Activated T-helper 1 cell treated with anti-CD3 and anti-CD28 coated beads, Interleukin-12 subunit alpha, Interleukin-12 subunit beta, Interleukin-2, Interleukin-4 antibody, amounts not matched to agents 30 ng/mL and 10 ng/mL and 1 ng/mL, durations not matched to agents 14 hours and 24 hours and 36 hours (primary cell): ENCODE measurements at regions of chr12 and their contacts with region 1.

Region 1: GRCh38 chr12:56468216-56469006 is at the start of gene SPRYD4:
- DNase-seq: peak; percentile 94
- H3K4me3 Mint-ChIP-seq: peak within 1 kb of the TSS; percentile 99
- H3K27ac Mint-ChIP-seq: peak within 1 kb of the TSS; percentile 98
- H3K4me1 Mint-ChIP-seq: peaks cover 19% of the 10 kb centered on the region
- H3K27me3 Mint-ChIP-seq: no peaks in the 10 kb centered on the region
- total RNA-seq, gene SPRYD4: 5.0 and 5.5 TPM in 2 replicates

Region 2: DNA sequence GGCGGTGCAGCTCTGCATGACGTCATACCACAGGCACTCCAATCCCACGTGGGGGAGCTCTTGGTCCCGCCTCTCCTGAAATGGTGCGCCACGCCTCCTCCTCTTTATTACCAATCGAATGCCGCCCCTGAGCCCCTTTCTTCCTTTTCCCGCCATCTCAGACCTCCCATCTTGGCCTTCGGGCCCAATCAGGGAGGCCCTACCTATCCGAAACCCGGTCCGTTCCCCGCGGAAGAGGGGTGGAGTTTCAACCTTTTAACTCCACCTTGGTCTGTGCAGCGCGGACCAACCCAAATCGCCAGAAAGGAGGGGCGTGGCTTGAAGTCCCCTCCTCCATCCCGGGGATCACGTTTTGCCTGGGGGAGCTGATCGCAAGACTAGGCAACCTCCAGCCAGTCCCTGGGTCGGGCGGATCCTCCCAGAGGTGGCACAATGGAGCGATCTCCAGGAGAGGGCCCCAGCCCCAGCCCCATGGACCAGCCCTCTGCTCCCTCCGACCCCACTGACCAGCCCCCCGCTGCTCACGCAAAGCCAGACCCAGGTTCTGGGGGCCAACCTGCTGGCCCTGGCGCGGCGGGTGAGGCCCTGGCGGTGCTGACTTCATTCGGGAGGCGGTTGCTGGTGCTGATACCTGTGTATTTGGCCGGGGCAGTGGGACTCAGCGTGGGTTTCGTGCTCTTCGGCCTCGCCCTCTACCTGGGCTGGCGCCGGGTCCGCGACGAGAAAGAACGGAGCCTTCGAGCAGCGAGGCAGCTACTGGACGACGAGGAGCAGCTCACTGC is 340.3 kb before region 1 on chr12 and contains the start of gene ESYT1:
- intact Hi-C with region 1: loop called (anchors 2 kb)
- DNase-seq: peak; percentile 98
- H3K4me3 Mint-ChIP-seq: peak within 1 kb of the TSS; percentile 97
- H3K27ac Mint-ChIP-seq: peak within 1 kb of the TSS; percentile 94
- H3K4me1 Mint-ChIP-seq: peaks cover 62% of the 10 kb centered on the region
- H3K27me3 Mint-ChIP-seq: no peaks in the 10 kb centered on the region
- total RNA-seq, gene ESYT1: 159 and 161 TPM in 2 replicates

Region 3: GRCh38 chr12:56258057-56258819 is 210.2 kb before region 1 on chr12 and contains the start of gene ANKRD52:
- intact Hi-C with region 1: loop called (anchors 2 kb)
- DNase-seq: peak; percentile 82
- H3K4me3 Mint-ChIP-seq: peak within 1 kb of the TSS; percentile 90
- H3K27ac Mint-ChIP-seq: peak within 1 kb of the TSS; percentile 83
- H3K4me1 Mint-ChIP-seq: peaks cover 22% of the 10 kb centered on the region
- H3K27me3 Mint-ChIP-seq: no peaks in the 10 kb centered on the region
- total RNA-seq, gene ANKRD52: 71.0 and 83.9 TPM in 2 replicates

Region 4: GRCh38 chr12:56299853-56300643 is 168.4 kb before region 1 on chr12 and contains the start of gene CS:
- intact Hi-C with region 1: loop called (anchors 1 kb)
- DNase-seq: peak; percentile 98
- H3K4me3 Mint-ChIP-seq: peak within 1 kb of the TSS; percentile 98
- H3K27ac Mint-ChIP-seq: peak within 1 kb of the TSS; percentile 90
- H3K4me1 Mint-ChIP-seq: peaks cover 51% of the 10 kb centered on the region
- H3K27me3 Mint-ChIP-seq: no peaks in the 10 kb centered on the region
- total RNA-seq, gene CS: 269 and 280 TPM in 2 replicates

Region 5: GRCh38 chr12:56333679-56334489 is 134.5 kb before region 1 on chr12 and contains the start of gene PAN2:
- intact Hi-C with region 1: loop called (anchors 1 kb)
- DNase-seq: peak; percentile 94
- H3K4me3 Mint-ChIP-seq: peak within 1 kb of the TSS; percentile 87
- H3K27ac Mint-ChIP-seq: peak within 1 kb of the TSS; percentile 100
- H3K4me1 Mint-ChIP-seq: peaks cover 42% of the 10 kb centered on the region
- H3K27me3 Mint-ChIP-seq: no peaks in the 10 kb centered on the region
- total RNA-seq, gene PAN2: 20.9 and 21.3 TPM in 2 replicates

Region 6: GRCh38 chr12:56448860-56449621 is 19.4 kb before region 1 on chr12 and contains the start of gene TIMELESS:
- intact Hi-C with region 1: loop called (anchors 1 kb)
- DNase-seq: peak; percentile 87
- H3K4me3 Mint-ChIP-seq: peak within 1 kb of the TSS; percentile 92
- H3K27ac Mint-ChIP-seq: peak within 1 kb of the TSS; percentile 85
- H3K4me1 Mint-ChIP-seq: peaks cover 27% of the 10 kb centered on the region
- H3K27me3 Mint-ChIP-seq: no peaks in the 10 kb centered on the region
- total RNA-seq, gene TIMELESS: 44.9 and 45.8 TPM in 2 replicates

Region 7: GRCh38 chr12:56636675-56637540 is 168.5 kb after region 1 on chr12:
- intact Hi-C with region 1: loop called (anchors 1 kb)
- DNase-seq: peak; percentile 79
- H3K4me3 Mint-ChIP-seq: peak overlapping the region; percentile 98
- H3K27ac Mint-ChIP-seq: peak overlapping the region; percentile 92
- H3K4me1 Mint-ChIP-seq: peaks cover 62% of the 10 kb centered on the region
- H3K27me3 Mint-ChIP-seq: no peaks in the 10 kb centered on the region

Region 8: GRCh38 chr12:56716458-56716857 is 248.0 kb after region 1 on chr12:
- intact Hi-C with region 1: no loop called
- DNase-seq: no peak
- H3K4me3 Mint-ChIP-seq: no peak overlapping the region
- H3K27ac Mint-ChIP-seq: peak overlapping the region; percentile 82
- H3K4me1 Mint-ChIP-seq: peaks cover 53% of the 10 kb centered on the region
- H3K27me3 Mint-ChIP-seq: no peaks in the 10 kb centered on the region